ENCODE measurements at regions of chr9 and their contacts with region 1.

Region 1: DNA sequence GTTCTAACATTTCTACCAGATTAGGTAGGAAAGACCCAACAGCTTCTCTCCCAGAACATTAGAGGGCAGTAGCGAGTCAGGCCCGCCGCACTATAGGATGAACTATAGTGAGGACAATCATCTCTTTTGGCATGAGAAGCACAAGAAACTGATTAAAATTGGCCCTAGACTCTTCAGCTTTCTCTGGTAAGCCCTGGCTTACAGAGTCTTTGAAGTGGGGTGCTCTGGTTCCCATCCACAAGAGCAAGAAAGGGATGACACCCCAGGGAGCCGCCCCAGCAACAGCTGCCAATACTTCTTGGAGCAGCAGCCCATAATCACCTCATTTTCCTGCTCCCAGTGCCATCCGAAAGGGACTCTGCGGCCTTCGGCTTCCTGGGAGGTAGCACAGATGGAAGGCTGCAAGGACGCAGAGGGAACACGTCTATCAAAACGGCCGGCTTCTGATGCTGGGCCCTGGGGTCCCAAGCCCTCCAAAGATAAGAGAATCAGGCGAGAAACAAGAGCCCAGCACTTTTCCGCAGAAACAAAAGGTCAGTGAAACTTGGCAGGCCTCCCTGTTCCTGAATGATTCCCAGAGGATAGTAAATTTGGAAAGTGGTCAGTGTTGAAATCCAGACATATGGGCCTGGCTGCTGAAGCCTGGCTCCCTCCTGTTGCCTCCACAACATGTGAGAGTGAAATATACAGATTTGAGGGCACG is 69.3 kb downstream of the HSD17B3 start:
- DNase-seq: peak; percentile 56
- ATAC-seq: peak; percentile 97
- H3K4me3 ChIP-seq: no peak overlapping the region
- H3K27ac ChIP-seq: no peak overlapping the region
- H3K4me1 ChIP-seq: no peaks in the 10 kb centered on the region
- H3K27me3 ChIP-seq: peaks cover 14% of the 10 kb centered on the region
- CTCF ChIP-seq: peak; percentile 81
- POLR2A ChIP-seq: no peak
- RAD21 ChIP-seq: peak; percentile 72

Region 2: DNA sequence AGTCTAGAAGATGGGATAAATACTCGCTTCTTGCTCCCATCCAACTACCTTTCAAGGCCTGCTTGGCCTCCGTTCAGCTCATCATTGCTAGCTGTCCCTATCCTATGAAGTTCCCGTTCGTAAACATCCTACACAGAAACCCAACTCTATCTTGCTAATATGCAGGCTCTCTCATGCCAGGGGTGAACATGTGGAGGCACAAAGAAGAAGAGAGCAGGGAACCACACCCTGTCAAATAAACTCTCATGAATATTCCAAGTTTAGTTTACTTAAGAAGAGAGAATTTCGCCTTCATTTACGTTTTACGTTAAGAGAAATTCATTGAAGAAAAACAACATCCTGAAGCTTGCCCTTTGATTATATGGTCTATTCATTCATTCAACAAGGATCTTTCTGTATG is 77.2 kb after region 1 on chr9:
- CTCF ChIA-PET with region 1: no interaction called
- POLR2A ChIA-PET with region 1: no interaction called
- dilution Hi-C with region 1: no loop called
- in situ Hi-C with region 1: loop called (anchors 5 kb)
- intact Hi-C with region 1: no loop called
- DNase-seq: no peak
- ATAC-seq: no peak
- H3K4me3 ChIP-seq: no peak overlapping the region
- H3K27ac ChIP-seq: no peak overlapping the region
- H3K4me1 ChIP-seq: no peaks in the 10 kb centered on the region
- H3K27me3 ChIP-seq: peaks cover 3% of the 10 kb centered on the region; the same call in 1 of the 2 replicates
- CTCF ChIP-seq: no peak
- POLR2A ChIP-seq: no peak
- RAD21 ChIP-seq: no peak

Region 3: GRCh38 chr9:96317335-96317980 is 84.8 kb after region 1 on chr9:
- CTCF ChIA-PET with region 1: interaction called, 3 read pairs
- POLR2A ChIA-PET with region 1: no interaction called
- dilution Hi-C with region 1: no loop called
- in situ Hi-C with region 1: loop called (anchors 5 kb)
- intact Hi-C with region 1: loop called (anchors 1 kb)
- DNase-seq: peak; percentile 70
- ATAC-seq: peak; percentile 90
- H3K4me3 ChIP-seq: no peak overlapping the region
- H3K27ac ChIP-seq: no peak overlapping the region
- H3K4me1 ChIP-seq: no peaks in the 10 kb centered on the region
- H3K27me3 ChIP-seq: no peaks in the 10 kb centered on the region
- CTCF ChIP-seq: peak; percentile 93
- POLR2A ChIP-seq: no peak
- RAD21 ChIP-seq: peak; percentile 84

Region 4: GRCh38 chr9:96667361-96667728 is 434.7 kb after region 1 on chr9:
- CTCF ChIA-PET with region 1: interaction called, 5 read pairs
- POLR2A ChIA-PET with region 1: no interaction called
- dilution Hi-C with region 1: no loop called
- in situ Hi-C with region 1: loop called (anchors 10 kb)
- intact Hi-C with region 1: loop called (anchors 1 kb)
- DNase-seq: no peak
- ATAC-seq: no peak
- H3K4me3 ChIP-seq: no peak overlapping the region
- H3K27ac ChIP-seq: no peak overlapping the region
- H3K4me1 ChIP-seq: no peaks in the 10 kb centered on the region
- H3K27me3 ChIP-seq: no peaks in the 10 kb centered on the region
- CTCF ChIP-seq: no peak
- POLR2A ChIP-seq: no peak
- RAD21 ChIP-seq: no peak

Region 5: DNA sequence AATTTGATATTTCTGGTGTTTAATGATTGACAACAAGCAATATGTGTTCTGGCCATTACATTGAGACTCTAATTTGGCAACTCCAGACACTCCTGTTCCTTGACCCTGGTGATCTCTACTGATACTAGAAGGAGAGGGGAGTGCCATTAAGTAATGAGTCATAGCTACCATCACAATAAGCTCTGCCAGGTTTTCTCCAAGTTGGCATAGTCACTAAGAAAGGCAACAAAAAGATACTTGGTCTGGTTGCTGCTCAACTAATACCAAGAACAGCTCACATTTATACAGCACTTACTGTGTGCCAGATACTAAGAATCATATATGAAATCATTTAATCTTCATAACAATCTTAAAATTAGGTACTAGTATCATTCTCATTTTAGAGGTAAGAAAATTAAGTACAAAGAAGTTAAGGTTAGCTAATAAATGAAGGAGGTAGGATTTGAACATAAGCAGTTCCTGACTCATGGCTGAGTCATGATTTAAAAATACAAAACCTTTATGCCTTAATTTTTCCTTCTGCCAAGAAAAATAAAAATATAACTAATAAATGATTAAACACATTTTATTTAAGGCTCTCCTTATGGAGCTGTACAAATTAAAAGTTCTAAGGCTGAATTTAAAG is 442.3 kb after region 1 on chr9:
- CTCF ChIA-PET with region 1: no interaction called
- POLR2A ChIA-PET with region 1: no interaction called
- dilution Hi-C with region 1: no loop called
- in situ Hi-C with region 1: loop called (anchors 10 kb)
- intact Hi-C with region 1: no loop called
- DNase-seq: peak; percentile 77
- ATAC-seq: peak; percentile 57
- H3K4me3 ChIP-seq: no peak overlapping the region
- H3K27ac ChIP-seq: no peak overlapping the region
- H3K4me1 ChIP-seq: peaks cover 4% of the 10 kb centered on the region; the same call in 1 of the 2 replicates
- H3K27me3 ChIP-seq: 0 out of 2 replicates have a peak, but pooled peaks cover 1% of the 10 kb centered on the region
- CTCF ChIP-seq: no peak
- POLR2A ChIP-seq: no peak
- RAD21 ChIP-seq: no peak